Activated CD8-positive, alpha-beta T cell treated with anti-CD3 and anti-CD28 coated beads for 36 hours (primary cell): ENCODE measurements at regions of chr7 and their contacts with region 1.

Region 1: DNA sequence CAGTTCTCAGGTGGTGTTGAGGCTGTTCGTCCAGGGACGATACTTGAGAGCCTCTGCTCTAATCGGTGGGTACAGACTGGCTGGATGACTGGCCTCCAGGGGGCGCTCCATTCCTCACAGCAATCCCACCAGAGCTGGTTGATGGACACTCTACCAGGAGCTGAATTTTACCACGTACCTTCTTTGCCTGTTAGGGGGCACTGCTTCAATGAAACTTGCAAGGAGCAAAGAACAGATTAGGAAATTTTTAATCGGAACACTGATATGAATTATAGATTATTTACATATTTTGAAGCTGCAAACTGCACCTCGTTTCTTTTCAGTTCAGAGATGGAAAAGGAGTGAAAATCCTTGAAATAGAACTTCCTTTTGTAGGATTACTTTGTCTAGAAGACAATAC is 44.9 kb downstream of the KBTBD2 start:
- DNase-seq: peak; percentile 97
- ATAC-seq: peak; percentile 100
- H3K4me3 Mint-ChIP-seq: no peak overlapping the region
- H3K27ac Mint-ChIP-seq: peak overlapping the region; percentile 4
- H3K4me1 Mint-ChIP-seq: peaks cover 10% of the 10 kb centered on the region
- H3K27me3 Mint-ChIP-seq: peaks cover 19% of the 10 kb centered on the region
- CTCF ChIP-seq: peak; percentile 92

Region 2: GRCh38 chr7:32865448-32866030 is 18.8 kb after region 1 on chr7:
- CTCF ChIA-PET with region 1: interaction called, 47 read pairs
- POLR2A ChIA-PET with region 1: interaction called, 3 read pairs
- intact Hi-C with region 1: no loop called
- DNase-seq: no peak
- ATAC-seq: no peak
- H3K4me3 Mint-ChIP-seq: no peak overlapping the region
- H3K27ac Mint-ChIP-seq: no peak overlapping the region
- H3K4me1 Mint-ChIP-seq: peaks cover 2% of the 10 kb centered on the region
- H3K27me3 Mint-ChIP-seq: no peaks in the 10 kb centered on the region
- CTCF ChIP-seq: no peak

Region 3: GRCh38 chr7:32891800-32892520 is 45.3 kb after region 1 on chr7:
- CTCF ChIA-PET with region 1: interaction called, 57 read pairs
- POLR2A ChIA-PET with region 1: interaction called, 5 read pairs
- intact Hi-C with region 1: no loop called
- DNase-seq: peak; percentile 99
- ATAC-seq: peak; percentile 69
- H3K4me3 Mint-ChIP-seq: peak overlapping the region; percentile 94
- H3K27ac Mint-ChIP-seq: peak overlapping the region; percentile 100
- H3K4me1 Mint-ChIP-seq: peaks cover 43% of the 10 kb centered on the region
- H3K27me3 Mint-ChIP-seq: no peaks in the 10 kb centered on the region
- CTCF ChIP-seq: no peak

Region 4: GRCh38 chr7:32942786-32943653 is 96.3 kb after region 1 on chr7:
- CTCF ChIA-PET with region 1: interaction called, 95 read pairs
- POLR2A ChIA-PET with region 1: interaction called, 4 read pairs
- intact Hi-C with region 1: loop called (anchors 2 kb)
- DNase-seq: peak; percentile 68
- ATAC-seq: peak; percentile 94
- H3K4me3 Mint-ChIP-seq: peak overlapping the region; percentile 76
- H3K27ac Mint-ChIP-seq: no peak overlapping the region
- H3K4me1 Mint-ChIP-seq: peaks cover 15% of the 10 kb centered on the region
- H3K27me3 Mint-ChIP-seq: peaks cover 17% of the 10 kb centered on the region
- CTCF ChIP-seq: peak; percentile 69

Region 5: DNA sequence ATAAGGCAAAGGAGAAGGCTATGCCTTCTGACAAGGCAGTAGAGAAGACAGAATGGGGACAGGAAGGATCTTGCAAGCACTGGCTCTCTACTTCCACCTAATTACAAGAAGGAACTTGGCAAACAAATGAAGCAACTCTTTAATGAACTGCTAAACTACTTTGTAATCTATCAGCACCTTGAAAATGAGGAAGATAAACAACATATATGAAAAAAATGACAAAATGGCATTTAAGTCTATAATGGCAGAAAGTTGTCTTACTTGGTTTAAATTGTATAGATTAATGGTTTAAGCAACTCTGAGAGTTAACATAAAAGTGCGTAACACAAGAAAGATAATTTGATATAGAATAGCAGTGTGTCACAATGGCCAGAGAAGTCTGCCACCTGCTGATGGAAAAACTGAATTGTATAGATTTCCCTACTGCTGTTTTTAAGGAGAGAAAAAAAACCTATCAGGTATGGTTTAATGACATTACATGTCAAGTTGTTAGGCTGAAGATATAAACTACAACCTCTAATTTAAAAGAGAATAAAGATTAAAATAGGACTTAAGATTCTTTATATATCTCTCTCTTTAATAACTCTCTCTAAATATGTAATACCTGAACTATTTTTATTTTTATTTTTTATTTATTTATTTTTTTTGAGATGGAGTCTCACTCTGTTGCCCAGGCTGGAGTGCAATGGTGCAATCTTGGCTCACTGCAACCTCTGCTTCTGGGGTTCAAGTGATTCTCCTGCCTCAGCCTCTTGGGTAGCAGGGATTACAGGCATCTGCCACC is 204.0 kb after region 1 on chr7:
- CTCF ChIA-PET with region 1: interaction called, 14 read pairs
- POLR2A ChIA-PET with region 1: no interaction called
- intact Hi-C with region 1: no loop called
- DNase-seq: peak; percentile 39
- ATAC-seq: peak; percentile 64
- H3K4me3 Mint-ChIP-seq: no peak overlapping the region
- H3K27ac Mint-ChIP-seq: no peak overlapping the region
- H3K4me1 Mint-ChIP-seq: peaks cover 47% of the 10 kb centered on the region
- H3K27me3 Mint-ChIP-seq: no peaks in the 10 kb centered on the region
- CTCF ChIP-seq: peak; percentile 71